Activated CD8-positive, alpha-beta T cell treated with anti-CD3 and anti-CD28 coated beads for 36 hours (primary cell): ENCODE measurements at regions of chr15 and their contacts with region 1.

Region 1: DNA sequence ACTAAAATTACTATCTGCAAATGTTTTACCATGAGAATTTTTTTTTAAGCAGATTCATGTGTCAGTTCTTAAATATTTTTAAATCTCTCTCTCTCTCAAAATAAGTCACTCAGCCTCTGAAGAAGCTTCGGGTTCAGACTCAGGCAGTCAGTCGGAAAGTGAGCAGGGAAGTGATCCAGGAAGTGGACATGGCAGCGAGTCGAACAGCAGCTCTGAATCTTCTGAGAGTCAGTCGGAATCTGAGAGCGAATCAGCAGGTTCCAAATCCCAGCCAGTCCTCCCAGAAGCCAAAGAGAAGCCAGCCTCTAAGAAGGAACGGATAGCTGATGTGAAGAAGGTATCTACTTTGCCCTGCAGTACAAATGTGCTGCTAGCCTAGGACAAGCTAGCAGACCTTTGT is 24.1 kb downstream of the CHD2 start:
- DNase-seq: no peak
- ATAC-seq: no peak
- H3K4me3 Mint-ChIP-seq: no peak overlapping the region
- H3K27ac Mint-ChIP-seq: peak overlapping the region; percentile 53
- H3K4me1 Mint-ChIP-seq: peaks cover 86% of the 10 kb centered on the region
- H3K27me3 Mint-ChIP-seq: no peaks in the 10 kb centered on the region
- CTCF ChIP-seq: no peak

Region 2: GRCh38 chr15:92938387-92938786 is 14.2 kb after region 1 on chr15:
- CTCF ChIA-PET with region 1: interaction called, 17 read pairs
- POLR2A ChIA-PET with region 1: interaction called, 5 read pairs
- intact Hi-C with region 1: no loop called
- DNase-seq: no peak
- ATAC-seq: peak; percentile 45
- H3K4me3 Mint-ChIP-seq: no peak overlapping the region
- H3K27ac Mint-ChIP-seq: no peak overlapping the region
- H3K4me1 Mint-ChIP-seq: peaks cover 39% of the 10 kb centered on the region
- H3K27me3 Mint-ChIP-seq: no peaks in the 10 kb centered on the region
- CTCF ChIP-seq: peak; percentile 52